PC-9 (cell line): ENCODE measurements at regions of chr1 and their contacts with region 1.

Region 1: DNA sequence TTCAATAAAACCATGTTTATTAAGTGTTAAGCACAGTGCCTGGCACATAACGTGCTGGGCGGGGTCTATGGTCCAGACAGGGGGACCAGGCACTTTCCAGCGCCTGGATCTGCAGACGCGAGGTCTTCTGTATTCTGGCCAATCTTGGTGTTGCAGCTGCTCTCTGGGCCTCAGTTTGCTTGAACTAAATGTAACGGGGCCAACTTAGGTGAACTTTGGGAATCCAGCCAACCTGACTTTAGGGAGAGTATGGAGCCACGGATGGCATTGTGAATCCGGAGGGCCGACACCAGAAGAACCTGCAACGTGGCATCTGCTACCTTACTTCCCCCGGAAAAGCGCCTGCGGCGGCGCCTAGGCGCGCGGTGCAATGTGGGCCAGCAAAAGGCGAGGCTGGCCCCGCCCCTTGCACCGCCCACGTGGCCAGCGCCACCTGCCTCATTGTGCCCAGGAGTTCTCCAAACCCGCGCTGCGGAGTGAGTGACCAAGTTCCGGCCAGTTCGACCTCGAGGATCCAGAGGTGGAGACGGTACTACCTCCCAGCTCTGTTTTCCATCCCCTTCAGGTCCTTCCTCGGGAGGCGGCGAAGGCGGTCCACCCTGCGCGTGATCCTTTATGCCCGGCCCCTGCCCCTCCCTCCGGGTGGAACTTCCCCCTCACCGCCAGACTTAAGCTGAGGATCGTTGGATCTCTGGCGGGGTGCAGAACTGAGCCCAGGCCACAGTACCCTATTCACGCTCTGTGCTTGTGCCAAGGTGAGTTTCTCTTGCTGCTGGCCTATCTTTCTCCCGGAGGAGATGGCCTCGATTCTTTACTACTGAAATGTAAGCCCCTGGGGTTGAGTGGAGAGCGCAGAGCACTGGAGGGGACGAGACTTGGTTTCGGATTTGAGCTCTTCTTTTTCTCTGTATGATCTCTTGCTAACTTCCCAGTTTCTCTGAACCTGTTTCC is at the start of gene AKR1A1:
- DNase-seq: peak; percentile 81 to 96
- H3K4me3 ChIP-seq: peak within 1 kb of the TSS; percentile 89
- H3K27ac ChIP-seq: peak within 1 kb of the TSS; percentile 86
- H3K4me1 ChIP-seq: peaks cover 24% of the 10 kb centered on the region
- H3K27me3 ChIP-seq: no peaks in the 10 kb centered on the region
- CTCF ChIP-seq: no peak
- total RNA-seq, gene AKR1A1: 202 and 277 TPM in 2 replicates

Region 2: DNA sequence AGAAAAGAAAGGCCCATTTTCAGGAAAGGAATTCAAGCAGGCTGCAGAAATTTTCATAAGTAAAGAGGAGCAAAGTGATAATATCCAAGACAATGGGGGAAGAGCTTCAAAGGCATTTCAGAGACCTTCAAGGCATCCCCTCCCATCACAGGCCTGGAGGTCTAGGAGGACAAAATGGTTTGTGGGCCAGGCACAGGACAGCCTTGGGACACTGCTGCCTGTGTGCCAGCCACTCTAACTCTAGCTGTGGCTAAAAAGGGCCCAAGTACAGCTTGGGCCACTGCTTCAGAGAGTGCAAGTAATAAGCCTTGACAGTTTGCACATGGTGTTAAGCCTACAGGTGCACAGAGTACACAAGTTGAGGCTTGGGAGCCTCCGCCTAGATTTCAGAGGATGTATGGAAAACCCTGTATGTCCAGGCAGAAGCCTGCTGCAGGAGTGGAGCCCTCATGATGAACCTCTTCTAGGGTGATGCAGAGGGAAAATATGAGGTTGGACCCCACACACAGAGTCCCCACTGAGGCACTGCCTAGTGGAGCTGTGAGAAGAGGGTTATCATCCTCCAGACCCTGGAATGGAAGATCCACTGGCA is 292.5 kb before region 1 on chr1:
- CTCF ChIA-PET with region 1: no interaction called
- POLR2A ChIA-PET with region 1: interaction called, 15 read pairs
- intact Hi-C with region 1: no loop called
- DNase-seq: no peak
- H3K4me3 ChIP-seq: no peak overlapping the region
- H3K27ac ChIP-seq: no peak overlapping the region
- H3K4me1 ChIP-seq: no peaks in the 10 kb centered on the region
- H3K27me3 ChIP-seq: no peaks in the 10 kb centered on the region
- CTCF ChIP-seq: no peak

Region 3: DNA sequence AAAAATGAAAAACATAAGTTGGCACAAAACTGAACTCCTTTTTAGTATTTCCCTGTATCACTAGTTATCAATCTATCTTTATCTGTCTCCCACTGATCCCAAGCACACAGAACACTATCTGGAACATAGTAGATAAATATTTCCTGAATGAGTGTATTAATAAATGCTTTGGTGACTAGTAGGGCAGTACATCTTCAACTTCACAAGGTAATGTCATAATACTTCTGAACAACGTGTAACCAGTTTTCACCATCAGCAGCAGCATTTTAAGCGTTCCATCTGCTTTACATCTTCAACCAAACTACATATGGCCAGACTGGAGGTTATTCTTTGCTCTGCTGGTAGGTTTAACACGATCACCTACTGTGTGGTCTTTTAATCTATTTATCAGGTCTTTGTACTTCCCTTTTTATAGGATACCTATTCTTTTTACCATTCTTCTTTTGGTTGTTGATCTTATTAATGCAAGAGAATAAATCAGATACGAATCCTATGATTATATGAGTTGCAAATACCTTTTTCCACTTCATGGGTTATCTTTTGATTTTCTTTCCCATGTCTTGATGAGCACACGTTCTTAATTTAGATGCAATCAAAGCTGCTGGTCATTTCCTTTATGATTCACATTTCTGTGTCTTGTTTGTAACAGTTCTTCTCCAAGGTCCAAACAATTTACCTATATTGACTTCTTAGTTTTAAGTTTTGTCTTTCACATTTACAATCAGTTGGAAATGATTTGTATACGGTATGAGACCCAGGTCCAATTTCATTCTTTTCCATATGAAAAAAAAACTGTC is 119.4 kb after region 1 on chr1:
- CTCF ChIA-PET with region 1: no interaction called
- POLR2A ChIA-PET with region 1: no interaction called
- intact Hi-C with region 1: no loop called
- DNase-seq: no peak
- H3K4me3 ChIP-seq: no peak overlapping the region
- H3K27ac ChIP-seq: no peak overlapping the region
- H3K4me1 ChIP-seq: no peaks in the 10 kb centered on the region
- H3K27me3 ChIP-seq: no peaks in the 10 kb centered on the region
- CTCF ChIP-seq: no peak